ENCODE measurements at regions of chr10 and their contacts with region 1.

Region 1: DNA sequence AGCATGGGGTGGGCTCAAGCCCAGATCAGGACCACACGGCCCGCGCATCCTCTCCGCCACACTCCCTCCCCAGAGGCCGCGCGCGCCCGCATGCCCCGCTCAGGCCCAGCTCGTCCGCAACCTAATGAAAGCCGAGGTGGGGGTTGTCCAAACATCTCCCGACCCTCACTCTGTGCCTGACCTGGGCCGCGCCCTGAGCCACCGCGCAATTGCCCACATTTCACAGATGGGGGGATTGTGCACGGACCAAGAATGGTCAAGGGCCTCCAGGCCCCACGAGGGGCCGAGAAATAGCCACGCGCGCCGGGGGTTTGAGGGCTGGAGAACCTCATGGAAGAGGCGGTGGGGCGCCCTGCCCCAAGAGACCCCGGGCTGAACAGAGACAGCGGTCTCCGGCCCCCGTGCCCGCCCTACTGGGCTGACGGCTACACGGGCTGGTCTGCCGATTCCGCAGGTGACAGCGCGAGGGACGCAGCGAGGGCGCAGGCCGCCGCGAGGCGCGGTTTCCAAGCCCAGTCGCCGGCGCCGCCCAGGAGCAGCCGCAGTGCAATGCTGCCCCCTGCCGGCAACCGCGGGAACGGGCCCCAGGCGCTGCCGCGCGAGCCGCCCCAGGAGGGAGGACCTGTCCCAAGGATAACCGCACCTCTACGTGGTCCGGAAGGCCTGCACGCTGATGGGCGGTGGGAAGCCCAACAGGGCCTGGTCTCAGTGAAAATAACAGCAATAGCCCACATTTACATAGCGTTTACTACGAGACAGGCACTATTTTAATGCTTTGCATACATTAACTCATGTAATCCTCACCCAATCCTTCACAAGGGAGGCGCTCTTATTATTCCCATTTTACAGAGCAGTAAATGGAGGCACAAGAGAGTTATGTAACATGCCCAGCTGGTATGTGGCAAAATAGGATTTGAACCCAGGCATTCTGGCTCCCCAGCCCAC is 10.5 kb upstream of the GRID1 start:
- DNase-seq: peak; percentile 49 to 82
- ATAC-seq: peak; percentile 99

Region 2: DNA sequence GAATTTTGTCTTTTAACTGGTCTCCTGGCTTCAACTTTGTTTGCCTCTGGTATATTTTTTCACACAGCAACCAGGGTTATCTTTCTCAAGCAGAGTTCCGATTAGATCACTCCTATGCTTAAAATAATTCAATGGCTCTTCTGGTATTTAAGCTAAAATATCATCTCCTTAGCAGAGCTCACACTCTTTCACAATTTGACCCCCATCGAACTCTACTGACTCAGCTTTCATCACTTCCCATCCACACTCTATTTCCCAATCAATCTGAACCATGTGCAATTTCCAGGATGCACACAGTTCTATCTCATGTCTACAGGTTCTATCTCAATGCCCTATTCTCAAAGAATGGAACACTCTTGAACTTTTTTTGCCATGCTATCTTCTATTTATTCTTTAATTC is 820.0 kb before region 1 on chr10:
- intact Hi-C with region 1: loop called in 1 of 2 experiments (anchors 10 kb)
- DNase-seq: no peak
- ATAC-seq: no peak